ENCODE measurements at regions of chr7 and their contacts with region 1.

Region 1: DNA sequence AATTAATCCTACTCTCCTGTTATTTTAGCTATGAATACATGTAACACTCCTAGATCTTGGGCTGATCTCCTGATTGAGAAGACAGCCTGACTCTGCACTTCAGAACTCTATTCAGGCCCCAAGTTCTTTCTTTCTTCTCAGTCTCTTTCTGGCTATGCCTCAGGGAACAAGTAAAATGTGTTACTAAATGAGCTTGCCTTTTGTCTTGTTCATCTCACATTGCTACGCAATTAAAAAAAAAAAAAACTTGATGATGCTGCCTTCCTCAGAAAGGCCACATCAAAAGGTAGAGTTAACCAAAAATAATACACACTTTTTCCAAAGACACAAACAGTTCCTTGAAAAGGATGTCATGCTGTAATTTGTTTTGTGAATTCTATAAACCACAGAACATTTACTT is 258.1 kb downstream of the TWIST1 start:
- DNase-seq: peak; percentile 1
- H3K4me3 Mint-ChIP-seq: peak overlapping the region; percentile 45
- H3K27ac Mint-ChIP-seq: peak overlapping the region; percentile 96
- H3K4me1 Mint-ChIP-seq: peaks cover 33% of the 10 kb centered on the region
- H3K27me3 Mint-ChIP-seq: no peaks in the 10 kb centered on the region

Region 2: DNA sequence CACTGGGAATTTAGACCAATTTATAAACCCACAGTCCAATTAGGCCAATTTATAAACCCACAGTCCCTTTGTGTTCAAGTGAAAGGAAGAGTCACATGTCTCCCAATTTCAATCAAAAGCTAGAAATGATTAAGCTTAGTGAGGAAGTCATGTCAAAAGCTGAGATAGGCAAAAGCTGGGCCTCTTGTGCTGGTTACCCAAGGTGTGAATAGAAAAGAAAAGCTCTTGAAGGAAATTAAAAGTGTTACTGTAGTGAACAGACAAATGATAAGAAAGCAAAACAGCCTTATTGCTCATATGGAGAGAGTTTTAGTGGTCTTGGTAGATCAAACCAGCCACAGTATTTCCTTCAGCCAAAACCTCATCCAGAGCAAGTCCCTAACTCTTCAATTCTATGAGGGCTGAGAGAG is 118.7 kb before region 1 on chr7:
- intact Hi-C with region 1: loop called (anchors 1 kb)
- DNase-seq: peak; percentile 4
- H3K4me3 Mint-ChIP-seq: no peak overlapping the region
- H3K27ac Mint-ChIP-seq: peak overlapping the region; percentile 9
- H3K4me1 Mint-ChIP-seq: peaks cover 14% of the 10 kb centered on the region
- H3K27me3 Mint-ChIP-seq: no peaks in the 10 kb centered on the region

Region 3: DNA sequence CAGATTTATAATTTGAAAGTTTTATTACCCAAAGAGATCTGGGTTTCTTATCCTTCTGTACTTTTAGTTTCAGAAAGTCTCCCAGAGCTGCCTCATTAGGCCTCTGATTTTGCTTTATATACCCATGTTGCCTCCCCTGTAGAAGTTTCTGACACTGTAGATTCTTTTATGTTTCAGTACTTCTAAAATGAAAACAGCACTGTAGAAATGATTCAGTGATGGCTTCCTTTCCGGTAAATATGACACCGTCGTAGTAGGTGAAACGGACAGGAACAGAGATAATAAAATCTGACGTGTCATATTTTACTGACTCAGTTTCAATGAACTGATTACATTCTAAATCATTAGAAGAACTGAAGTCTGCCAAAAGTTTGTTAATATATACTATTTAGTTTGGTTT is 14.6 kb before region 1 on chr7:
- intact Hi-C with region 1: loop called (anchors 1 kb)
- DNase-seq: no peak
- H3K4me3 Mint-ChIP-seq: no peak overlapping the region
- H3K27ac Mint-ChIP-seq: no peak overlapping the region
- H3K4me1 Mint-ChIP-seq: no peaks in the 10 kb centered on the region
- H3K27me3 Mint-ChIP-seq: no peaks in the 10 kb centered on the region

Measured in activated T-helper 1 cell treated with anti-CD3 and anti-CD28 coated beads, Interleukin-12 subunit alpha, Interleukin-12 subunit beta, Interleukin-2, Interleukin-4 antibody, amounts not matched to agents 30 ng/mL and 10 ng/mL and 1 ng/mL, durations not matched to agents 14 hours and 24 hours and 36 hours (primary cell).